Lower lobe of right lung (tissue), 2 donors: ENCODE measurements at regions of chr7 and their contacts with region 1.

Region 1: DNA sequence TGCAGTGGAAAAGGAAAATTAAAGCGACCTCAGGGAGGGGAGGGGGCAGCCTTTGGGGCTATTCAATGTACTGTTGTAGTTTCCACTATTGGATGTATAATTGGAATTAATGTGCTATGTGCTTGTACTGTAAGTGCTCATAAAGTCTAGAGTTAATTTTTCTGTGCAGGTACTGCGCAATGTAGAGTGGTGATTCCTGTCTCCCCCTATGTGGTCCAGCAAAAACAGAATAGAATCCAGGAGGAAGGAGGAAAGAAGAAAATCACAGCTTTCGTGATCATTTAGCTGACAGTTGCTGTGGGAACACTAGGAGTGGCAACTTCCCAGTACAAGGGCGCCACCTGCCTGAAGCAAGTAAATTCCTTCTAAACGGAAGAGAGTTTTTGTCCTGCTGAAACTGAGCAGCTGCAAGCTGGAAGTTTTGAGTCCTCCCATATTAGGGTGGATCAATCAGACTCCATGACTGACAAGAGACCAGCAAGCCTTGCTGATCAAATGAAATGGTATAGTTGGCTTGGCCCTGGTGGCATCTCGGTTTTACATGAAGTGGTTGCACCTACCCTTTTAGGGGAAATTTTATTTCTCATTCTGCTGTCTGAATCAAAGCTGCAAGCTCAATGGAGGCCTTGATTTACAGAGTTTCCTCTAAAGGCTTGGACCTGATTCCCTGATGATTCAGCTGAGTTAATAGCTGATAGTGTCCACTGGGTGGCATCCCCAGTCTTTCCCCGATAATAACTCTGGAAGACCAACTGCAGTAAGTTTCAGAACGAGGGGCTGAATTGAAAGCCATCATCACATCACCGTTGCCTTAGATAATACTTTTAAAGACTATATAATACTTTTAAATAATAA is 299.8 kb downstream of the HGF start:
- DNase-seq: peak; percentile 68
- ATAC-seq: peak; percentile 68 to 80
- H3K4me3 ChIP-seq: no peak overlapping the region
- H3K27ac ChIP-seq: no peak overlapping the region
- H3K4me1 ChIP-seq: no peaks in the 10 kb centered on the region
- H3K27me3 ChIP-seq: no peaks in the 10 kb centered on the region
- CTCF ChIP-seq: peak; percentile 71

Region 2: DNA sequence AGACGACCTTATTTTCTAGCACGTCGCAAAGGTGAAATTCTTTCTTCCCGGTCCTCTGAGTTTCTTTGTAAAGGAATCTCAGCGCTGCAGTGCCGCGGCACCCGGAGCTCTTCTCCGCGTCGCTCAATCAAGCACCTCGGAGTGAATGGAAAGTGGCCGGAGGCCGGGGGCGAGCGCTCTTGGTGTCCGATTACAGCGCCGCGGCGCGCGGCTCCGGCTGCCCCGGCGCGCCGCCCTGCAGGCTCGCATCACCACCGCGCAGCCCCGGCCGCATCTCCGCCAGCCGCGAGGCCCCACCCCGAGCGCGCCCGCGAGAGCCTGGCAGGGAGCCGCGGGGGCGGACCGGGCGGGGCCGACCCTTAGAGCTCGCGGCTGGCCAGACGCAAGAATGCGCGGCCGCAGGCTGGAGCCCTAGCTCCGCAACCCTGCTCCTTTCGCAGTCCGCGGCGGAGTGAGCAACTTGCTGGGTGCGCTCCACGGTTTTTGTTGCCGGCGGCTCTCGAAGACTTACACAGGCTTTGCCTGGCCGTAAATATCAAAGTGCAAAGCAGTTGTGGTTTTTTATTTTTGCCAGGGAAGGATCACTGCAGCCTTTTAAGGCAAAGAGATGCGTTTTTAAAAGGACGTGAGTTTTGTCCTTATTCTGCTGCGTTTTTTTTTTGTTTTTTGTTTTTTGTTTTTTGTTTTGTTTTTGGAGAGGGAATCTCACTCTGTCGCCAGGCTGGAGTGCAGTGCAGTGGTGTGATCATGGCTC is 551.0 kb before region 1 on chr7 and contains the start of gene SEMA3C:
- intact Hi-C with region 1: loop called (anchors 10 kb)
- DNase-seq: peak; percentile 94
- ATAC-seq: peak; percentile 99 to 100
- H3K4me3 ChIP-seq: peak within 1 kb of the TSS; percentile 66
- H3K27ac ChIP-seq: peak within 1 kb of the TSS; percentile 78
- H3K4me1 ChIP-seq: peaks cover 25% of the 10 kb centered on the region
- H3K27me3 ChIP-seq: no peaks in the 10 kb centered on the region
- CTCF ChIP-seq: peak; percentile 6
- total RNA-seq, gene SEMA3C: 34.8 TPM

Region 3: GRCh38 chr7:81150951-81151361 is 319.1 kb before region 1 on chr7:
- intact Hi-C with region 1: no loop called
- DNase-seq: no peak
- ATAC-seq: no peak
- H3K4me3 ChIP-seq: no peak overlapping the region
- H3K27ac ChIP-seq: no peak overlapping the region
- H3K4me1 ChIP-seq: no peaks in the 10 kb centered on the region
- H3K27me3 ChIP-seq: no peaks in the 10 kb centered on the region
- CTCF ChIP-seq: no peak